ENCODE measurements at regions of chr11 and their contacts with region 1.

Region 1: DNA sequence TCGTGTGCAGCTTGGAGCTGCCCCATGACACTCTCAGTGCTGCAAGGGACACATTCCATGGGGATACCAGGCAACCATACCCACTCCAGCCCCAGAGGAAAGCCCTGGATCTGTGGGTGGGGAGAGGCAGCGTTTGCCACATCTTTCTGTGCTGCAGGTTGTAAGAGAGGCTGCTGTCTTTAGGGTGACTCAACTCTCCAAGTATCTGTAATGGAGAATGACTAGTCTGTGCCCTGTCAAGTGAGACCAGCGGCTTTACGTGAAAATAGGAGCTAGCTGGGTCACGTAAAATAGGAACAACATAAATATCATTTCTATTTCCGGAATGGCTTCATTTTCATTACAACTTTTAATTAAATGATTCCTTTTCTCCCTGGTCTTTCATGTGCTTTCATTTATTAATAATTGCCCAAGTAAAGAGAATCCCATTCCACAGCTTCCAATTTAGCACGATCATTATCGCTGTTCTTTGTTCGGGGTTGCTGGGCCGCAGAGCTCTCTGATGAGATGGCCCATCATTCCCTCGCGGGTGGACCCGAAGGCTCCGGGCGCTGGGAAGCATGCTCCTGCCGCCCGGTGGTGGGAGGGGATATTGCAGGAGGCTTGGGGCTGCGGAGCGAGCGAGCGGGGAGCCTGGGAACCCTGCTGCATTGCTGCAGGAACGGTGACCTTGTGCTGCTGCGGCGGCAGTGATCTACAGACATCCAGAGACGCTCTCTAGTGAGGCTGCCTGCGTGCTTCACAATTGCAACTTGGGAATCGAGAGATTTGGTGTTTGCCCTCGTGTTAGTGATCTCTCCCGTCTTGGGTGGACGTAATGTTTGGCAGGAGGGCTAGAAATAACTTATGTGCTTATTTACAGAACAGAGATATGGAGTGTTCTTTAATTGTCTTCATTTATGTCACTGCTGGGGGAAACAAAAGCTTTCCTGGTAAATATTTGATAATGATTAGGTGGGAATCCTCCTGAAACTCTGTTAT is 10.6 kb downstream of the SLC6A5 start:
- ATAC-seq: peak; percentile 96 to 99 (median 98)
- H3K4me3 ChIP-seq: peak overlapping the region in 2 of 5 donors; percentile 7 to 12
- H3K27ac ChIP-seq: no peak overlapping the region
- H3K4me1 ChIP-seq: peaks cover 5% of the 10 kb centered on the region in 2 donors

Region 2: DNA sequence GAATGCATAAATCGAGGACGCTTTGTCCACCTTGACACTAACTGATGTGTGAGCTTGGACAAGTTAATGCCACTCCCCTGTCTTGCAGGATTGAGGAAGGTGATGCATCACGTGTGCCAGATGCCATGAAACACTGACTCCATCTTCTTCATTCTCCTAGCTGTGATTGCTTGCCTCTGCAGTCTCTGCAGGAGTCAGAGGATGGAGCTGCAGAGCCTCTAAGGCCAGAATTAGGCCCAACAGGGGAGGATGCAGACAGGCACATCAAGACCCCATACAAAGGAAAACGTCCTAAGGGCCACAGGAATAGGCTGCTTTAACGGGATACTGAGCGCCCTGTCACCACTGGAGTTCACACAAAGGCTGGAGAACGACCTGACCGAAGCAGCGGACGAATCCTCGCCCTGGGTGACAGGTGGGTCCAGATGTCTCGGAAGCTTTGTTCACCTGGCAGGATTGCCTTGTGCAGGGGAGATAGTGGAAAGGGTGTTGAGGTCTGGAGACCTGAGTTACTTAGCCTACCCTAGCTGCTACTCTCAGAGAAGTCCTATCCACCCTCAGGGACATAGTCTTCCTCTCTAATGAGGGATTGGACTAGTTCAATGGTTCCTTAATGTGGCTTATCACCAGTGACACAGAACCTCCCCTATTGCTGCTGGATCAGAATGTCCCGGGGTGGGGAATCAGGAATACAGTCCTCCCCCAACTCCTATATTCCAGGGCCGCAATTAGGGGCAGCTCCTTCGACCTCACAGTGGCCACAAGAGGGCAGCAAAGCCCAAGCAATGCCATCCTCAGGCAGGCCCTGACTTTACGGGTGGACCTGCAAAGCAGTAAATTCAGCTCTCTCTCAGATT is 482.1 kb before region 1 on chr11:
- in situ Hi-C with region 1: loop called in 1 of 9 experiments (anchors 25 kb)
- ATAC-seq: peak; percentile 67 to 90 (median 86)
- H3K4me3 ChIP-seq: no peak overlapping the region
- H3K27ac ChIP-seq: no peak overlapping the region
- H3K4me1 ChIP-seq: no peaks in the 10 kb centered on the region

Region 3: DNA sequence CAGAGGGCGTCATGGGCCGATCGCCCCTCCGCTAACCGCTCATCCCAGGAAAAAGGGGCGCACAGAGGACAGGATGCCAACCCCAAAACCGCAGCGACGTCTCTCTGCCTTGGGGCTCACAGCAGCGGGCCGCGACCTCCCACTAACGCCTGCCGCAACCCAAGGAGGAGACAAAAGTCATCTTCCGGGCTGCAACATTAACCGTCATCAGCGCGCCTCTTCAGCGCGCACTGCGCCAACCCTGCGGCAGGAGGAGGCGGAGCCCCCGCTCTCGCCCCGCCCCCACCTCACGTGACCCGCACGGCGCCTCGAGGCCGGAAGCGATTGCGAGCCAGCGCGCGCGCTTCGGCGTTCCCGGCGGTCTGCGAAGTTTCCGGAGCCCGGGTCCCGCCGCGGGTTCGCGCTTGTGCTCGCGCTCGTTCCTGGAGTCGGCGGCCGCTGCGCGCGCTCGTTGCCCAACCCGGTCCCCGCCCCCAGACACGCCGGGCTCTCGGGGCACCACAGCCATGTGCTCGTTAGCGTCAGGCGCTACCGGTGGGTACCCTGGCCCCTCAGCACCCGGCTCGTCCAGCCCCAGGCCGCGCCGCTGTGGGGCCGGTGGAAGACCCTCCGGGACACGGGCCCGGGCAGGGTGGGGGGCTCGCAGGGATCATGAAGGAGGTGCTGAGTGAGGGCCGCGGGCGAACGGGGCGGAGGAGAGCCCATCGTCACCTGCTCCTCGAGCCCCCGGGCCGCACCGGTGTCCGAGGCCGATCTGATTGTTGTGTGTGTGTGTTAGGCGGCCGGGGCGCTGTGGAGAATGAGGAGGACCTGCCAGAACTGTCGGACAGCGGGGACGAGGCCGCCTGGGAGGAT is 222.5 kb before region 1 on chr11 and contains the start of gene PRMT3:
- in situ Hi-C with region 1: loop called in 7 of 9 experiments (anchors 10 to 25 kb)
- ATAC-seq: peak; percentile 85 to 93 (median 90)
- H3K4me3 ChIP-seq: peak within 1 kb of the TSS; percentile 74 to 95 (median 81)
- H3K27ac ChIP-seq: peak within 1 kb of the TSS; percentile 79 to 80
- H3K4me1 ChIP-seq: peaks cover 6 to 9% of the 10 kb centered on the region in 2 donors
- total RNA-seq, gene PRMT3: 12.6 to 35.1 (median 17.1) TPM

Region 4: GRCh38 chr11:20397281-20397680 is 212.7 kb before region 1 on chr11:
- in situ Hi-C with region 1: loop called (anchors 10 to 25 kb)
- ATAC-seq: peak; percentile 55 to 98 (median 80)
- H3K4me3 ChIP-seq: no peak overlapping the region
- H3K27ac ChIP-seq: no peak overlapping the region
- H3K4me1 ChIP-seq: peaks cover 0 to 4% of the 10 kb centered on the region in 2 donors

Region 5: GRCh38 chr11:20415432-20415831 is 194.6 kb before region 1 on chr11:
- in situ Hi-C with region 1: loop called in 2 of 9 experiments (anchors 25 kb)
- ATAC-seq: no peak
- H3K4me3 ChIP-seq: no peak overlapping the region
- H3K27ac ChIP-seq: no peak overlapping the region
- H3K4me1 ChIP-seq: peaks cover 0 to 3% of the 10 kb centered on the region in 2 donors